PC-9 (cell line): ENCODE measurements at regions of chr1 and their contacts with region 1.

Region 1: GRCh38 chr1:242467556-242468145 is 56.8 kb downstream of the PLD5 start:
- DNase-seq: peak in 1 of 2 experiments; percentile 15
- H3K4me3 ChIP-seq: no peak overlapping the region
- H3K27ac ChIP-seq: no peak overlapping the region
- H3K4me1 ChIP-seq: no peaks in the 10 kb centered on the region
- H3K27me3 ChIP-seq: peaks cover 49% of the 10 kb centered on the region
- CTCF ChIP-seq: peak; percentile 69

Region 2: DNA sequence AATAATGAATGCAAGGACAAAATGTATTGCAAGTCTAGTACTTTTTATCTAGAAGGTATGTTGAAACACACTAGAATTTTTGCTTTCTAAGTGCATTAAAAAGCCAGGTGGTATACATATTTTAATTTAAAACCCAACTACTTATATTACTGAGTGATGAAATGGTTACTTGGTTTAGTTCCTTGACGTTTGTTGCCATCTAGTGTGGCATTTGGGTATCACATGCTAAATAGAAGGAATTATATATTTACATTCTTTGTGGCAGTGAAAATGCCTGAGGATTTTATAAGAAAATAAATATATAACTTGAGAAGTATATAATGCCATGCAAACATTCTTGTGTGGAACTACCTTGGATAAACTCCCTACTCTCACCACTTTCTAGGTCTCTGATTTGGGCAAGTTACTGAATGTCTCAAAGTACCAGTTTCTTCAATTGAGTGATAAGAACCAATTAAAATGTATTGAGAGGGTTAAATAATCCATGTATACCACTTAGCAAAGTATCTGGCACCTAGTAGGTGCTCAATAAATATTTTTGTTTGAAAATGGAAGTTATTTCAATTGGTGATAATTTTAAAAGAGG is 857.7 kb after region 1 on chr1:
- CTCF ChIA-PET with region 1: no interaction called
- POLR2A ChIA-PET with region 1: no interaction called
- intact Hi-C with region 1: loop called (anchors 5 kb)
- DNase-seq: peak in 1 of 2 experiments; percentile 44
- H3K4me3 ChIP-seq: no peak overlapping the region
- H3K27ac ChIP-seq: no peak overlapping the region
- H3K4me1 ChIP-seq: no peaks in the 10 kb centered on the region
- H3K27me3 ChIP-seq: no peaks in the 10 kb centered on the region
- CTCF ChIP-seq: peak; percentile 91